ENCODE measurements at regions of chr13 and their contacts with region 1.

Region 1: DNA sequence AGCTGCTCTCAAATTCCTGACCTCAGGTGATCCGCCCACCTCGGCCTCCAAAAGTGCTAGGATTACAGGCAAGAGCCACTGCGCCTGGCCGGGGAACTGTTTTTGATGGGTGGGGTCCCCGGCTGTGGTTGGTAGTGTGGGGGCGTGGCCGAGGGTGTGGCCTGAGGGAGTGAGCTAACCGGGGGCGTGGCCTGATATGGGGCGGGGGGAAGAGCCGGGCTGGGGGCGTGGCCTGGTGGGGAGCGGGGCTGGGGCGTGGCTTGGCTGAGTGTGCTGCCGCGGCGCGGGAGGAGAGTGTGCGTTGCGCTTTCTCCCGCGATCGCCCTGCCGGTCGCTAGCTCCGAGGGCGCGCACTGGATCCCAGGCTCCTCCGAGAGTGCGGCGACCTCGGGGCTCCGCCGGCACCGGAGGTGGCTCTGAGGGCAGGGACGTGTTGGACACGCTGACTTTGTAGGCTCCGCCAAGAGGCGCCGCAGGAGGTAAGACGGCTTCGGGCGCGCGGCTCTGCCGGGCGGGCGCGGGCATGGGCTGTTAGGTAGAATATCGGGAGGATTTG is at the start of gene SPATA13:
- DNase-seq: peak; percentile 97
- ATAC-seq: peak; percentile 95
- H3K4me3 Mint-ChIP-seq: peak within 1 kb of the TSS; percentile 83
- H3K27ac Mint-ChIP-seq: no peak within 1 kb of the TSS
- H3K4me1 Mint-ChIP-seq: peaks cover 12% of the 10 kb centered on the region
- H3K27me3 Mint-ChIP-seq: peaks cover 9% of the 10 kb centered on the region
- total RNA-seq, gene SPATA13: 47.6 to 51.5 TPM

Region 2: DNA sequence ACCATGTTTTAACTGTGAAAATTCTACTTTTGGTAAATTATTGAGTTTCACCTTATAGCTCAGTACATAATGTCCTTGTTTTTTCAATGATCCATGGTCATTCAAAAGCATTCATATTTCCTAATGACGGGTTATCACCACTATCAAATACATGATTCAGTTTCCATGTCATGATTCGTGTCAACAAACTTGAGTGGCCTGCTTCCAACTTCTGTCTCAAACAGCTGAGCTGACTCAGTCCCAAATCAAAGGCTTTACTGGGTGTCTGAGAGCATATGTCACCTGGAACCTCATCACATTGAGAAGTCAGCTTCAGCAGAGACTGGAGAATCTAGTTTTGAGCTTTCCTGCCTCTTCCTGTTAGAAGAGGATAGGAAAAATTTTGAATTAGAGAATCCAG is 1020.0 kb before region 1 on chr13:
- CTCF ChIA-PET with region 1: no interaction called
- POLR2A ChIA-PET with region 1: no interaction called
- intact Hi-C with region 1: no loop called
- DNase-seq: no peak
- ATAC-seq: no peak
- H3K4me3 Mint-ChIP-seq: no peak overlapping the region
- H3K27ac Mint-ChIP-seq: no peak overlapping the region
- H3K4me1 Mint-ChIP-seq: no peaks in the 10 kb centered on the region
- H3K27me3 Mint-ChIP-seq: no peaks in the 10 kb centered on the region

Region 3: DNA sequence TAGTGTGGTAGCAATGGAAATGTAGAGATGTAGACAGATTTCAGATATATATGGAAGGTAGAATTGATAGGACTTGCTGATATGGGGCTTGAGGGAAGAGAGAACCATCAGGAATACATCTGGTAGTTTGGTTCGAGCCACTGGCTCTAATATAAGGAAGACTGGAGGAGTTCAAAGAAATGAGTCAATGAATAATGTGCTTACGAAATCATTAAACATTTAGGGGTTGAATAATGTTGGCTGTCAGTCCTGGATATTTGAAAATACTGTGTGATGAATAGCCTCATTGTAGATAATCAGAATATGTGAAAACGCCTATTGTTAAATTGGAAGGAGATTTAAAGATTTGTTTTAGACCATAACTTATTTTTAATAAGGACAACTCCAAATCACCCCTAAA is 958.1 kb before region 1 on chr13:
- CTCF ChIA-PET with region 1: no interaction called
- POLR2A ChIA-PET with region 1: no interaction called
- intact Hi-C with region 1: no loop called
- DNase-seq: no peak
- ATAC-seq: no peak
- H3K4me3 Mint-ChIP-seq: no peak overlapping the region
- H3K27ac Mint-ChIP-seq: no peak overlapping the region
- H3K4me1 Mint-ChIP-seq: no peaks in the 10 kb centered on the region
- H3K27me3 Mint-ChIP-seq: peaks cover 16% of the 10 kb centered on the region

Region 4: DNA sequence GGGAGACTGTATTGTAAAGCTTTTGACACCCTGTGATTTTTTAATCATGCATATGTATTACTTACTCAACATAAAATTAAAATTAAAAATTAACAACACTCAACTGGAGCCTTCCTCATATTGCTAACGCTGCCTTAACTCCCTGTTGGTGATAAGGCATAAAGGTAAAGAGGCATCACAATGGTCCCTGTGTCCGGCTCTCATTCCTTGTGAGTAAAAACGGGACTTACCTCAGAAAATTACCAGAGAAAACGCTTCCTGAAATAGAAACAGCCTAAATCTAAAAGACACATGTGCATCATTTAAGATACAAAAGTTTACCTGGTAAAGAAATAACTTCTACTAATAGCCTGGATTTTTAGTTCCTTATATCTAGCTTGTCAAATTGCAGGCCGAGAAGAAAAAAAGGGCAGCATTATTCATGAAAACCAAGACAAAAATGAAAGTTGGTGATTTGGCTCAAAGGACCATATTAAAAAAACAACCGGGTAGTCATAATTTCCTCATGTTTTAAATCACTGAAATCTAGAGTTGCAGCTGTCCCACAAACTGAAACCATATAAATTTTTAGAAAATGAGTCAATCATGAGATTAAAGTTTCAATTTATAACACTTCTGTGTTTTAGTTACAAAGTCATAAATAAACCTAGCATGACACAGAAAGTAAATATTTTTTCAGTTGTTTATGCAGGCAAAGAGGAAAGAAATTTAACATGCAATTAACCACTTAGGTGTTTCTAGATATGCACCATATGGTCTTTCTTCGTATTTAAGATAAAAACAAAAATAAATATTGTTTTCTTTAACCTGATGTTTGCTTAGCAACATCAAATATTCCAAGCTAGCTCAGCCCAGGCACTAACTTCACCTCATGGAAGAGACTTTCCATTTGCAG is 366.0 kb before region 1 on chr13:
- CTCF ChIA-PET with region 1: no interaction called
- POLR2A ChIA-PET with region 1: no interaction called
- intact Hi-C with region 1: loop called in 1 of 2 experiments (anchors 10 kb)
- DNase-seq: no peak
- ATAC-seq: peak; percentile 75
- H3K4me3 Mint-ChIP-seq: no peak overlapping the region
- H3K27ac Mint-ChIP-seq: no peak overlapping the region
- H3K4me1 Mint-ChIP-seq: peaks cover 26% of the 10 kb centered on the region
- H3K27me3 Mint-ChIP-seq: no peaks in the 10 kb centered on the region

Region 5: GRCh38 chr13:24097064-24097463 is 63.5 kb before region 1 on chr13:
- CTCF ChIA-PET with region 1: no interaction called
- POLR2A ChIA-PET with region 1: no interaction called
- intact Hi-C with region 1: loop called in 1 of 2 experiments (anchors 1 kb)
- DNase-seq: peak; percentile 67
- ATAC-seq: peak; percentile 90
- H3K4me3 Mint-ChIP-seq: peak overlapping the region; percentile 29
- H3K27ac Mint-ChIP-seq: peak overlapping the region; percentile 72
- H3K4me1 Mint-ChIP-seq: peaks cover 19% of the 10 kb centered on the region
- H3K27me3 Mint-ChIP-seq: peaks cover 5% of the 10 kb centered on the region

Region 6: DNA sequence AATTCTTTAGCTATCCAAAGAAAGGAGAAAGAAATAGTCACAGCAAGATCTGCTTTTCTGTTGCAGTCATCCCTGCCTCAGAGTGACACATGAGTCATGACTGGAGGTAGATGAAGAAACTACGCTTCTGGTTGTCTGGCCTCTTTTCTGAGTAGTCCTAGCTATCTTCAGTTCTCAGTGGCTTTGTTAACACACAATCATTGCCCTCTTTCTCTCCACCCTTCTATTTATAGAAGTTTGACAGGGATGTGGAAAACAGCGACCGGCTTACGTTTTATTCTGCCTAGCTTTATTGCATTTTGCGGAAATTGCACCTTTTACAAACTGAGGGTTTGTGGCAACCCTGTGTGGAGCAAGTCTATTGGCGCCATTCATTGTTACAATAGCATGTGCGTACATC is 26.7 kb after region 1 on chr13:
- CTCF ChIA-PET with region 1: interaction called, 3 read pairs
- POLR2A ChIA-PET with region 1: interaction called, 5 read pairs
- intact Hi-C with region 1: loop called in 1 of 2 experiments (anchors 1 kb)
- DNase-seq: peak; percentile 43
- ATAC-seq: peak; percentile 94
- H3K4me3 Mint-ChIP-seq: no peak overlapping the region
- H3K27ac Mint-ChIP-seq: peak overlapping the region; percentile 10
- H3K4me1 Mint-ChIP-seq: peaks cover 28% of the 10 kb centered on the region
- H3K27me3 Mint-ChIP-seq: no peaks in the 10 kb centered on the region

Region 7: DNA sequence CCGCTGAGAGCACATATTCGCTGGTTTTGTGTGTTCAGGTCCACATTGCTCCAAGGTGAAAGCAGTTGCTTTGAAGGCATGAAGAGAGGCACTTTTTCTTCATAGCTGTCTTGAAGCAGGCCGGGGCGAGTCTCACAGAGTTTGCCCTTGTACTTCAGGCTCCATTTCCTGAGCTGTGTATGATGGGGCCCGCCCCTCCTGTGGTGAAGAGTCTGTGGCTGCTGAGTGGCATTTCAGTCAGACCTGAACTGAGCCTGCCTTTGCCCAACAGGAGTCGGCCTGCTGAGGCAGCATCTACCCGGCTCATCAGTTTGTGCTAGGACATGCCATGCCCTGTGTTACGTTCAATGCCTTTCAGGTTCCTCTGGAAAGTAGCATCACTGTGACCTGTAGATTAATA is 104.4 kb after region 1 on chr13:
- CTCF ChIA-PET with region 1: interaction called, 3 read pairs
- POLR2A ChIA-PET with region 1: no interaction called
- intact Hi-C with region 1: loop called in 1 of 2 experiments (anchors 5 kb)
- DNase-seq: peak; percentile 92
- ATAC-seq: peak; percentile 92
- H3K4me3 Mint-ChIP-seq: peak overlapping the region; percentile 66
- H3K27ac Mint-ChIP-seq: peak overlapping the region; percentile 95
- H3K4me1 Mint-ChIP-seq: peaks cover 92% of the 10 kb centered on the region
- H3K27me3 Mint-ChIP-seq: no peaks in the 10 kb centered on the region

Measured in activated CD4-positive, alpha-beta T cell treated with anti-CD3 and anti-CD28 coated beads for 36 hours (primary cell).